ENCODE measurements at regions of chr7 and their contacts with region 1.

Region 1: DNA sequence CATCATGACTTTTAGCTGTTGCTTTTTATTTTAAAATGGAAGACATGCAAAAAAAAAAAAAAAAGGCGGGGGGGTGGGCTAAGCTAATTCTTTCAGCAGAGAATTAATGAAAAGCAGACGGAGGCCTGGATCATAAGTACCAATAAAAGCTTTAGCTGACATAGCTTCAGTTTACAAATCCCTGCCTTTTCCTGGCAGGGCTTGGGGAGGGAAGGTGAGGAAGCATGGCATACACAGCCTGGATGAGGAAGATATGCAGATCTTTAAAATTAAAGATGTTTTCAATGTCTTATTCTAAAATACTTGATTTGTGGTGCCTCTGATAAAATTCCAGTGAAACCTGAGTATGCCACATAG is 57.0 kb downstream of the ICA1 start:
- DNase-seq: no peak
- ATAC-seq: no peak
- H3K4me3 ChIP-seq: no peak overlapping the region
- H3K4me3 Mint-ChIP-seq: no peak overlapping the region
- H3K27ac ChIP-seq: no peak overlapping the region
- H3K27ac Mint-ChIP-seq: no peak overlapping the region
- H3K4me1 ChIP-seq: no peaks in the 10 kb centered on the region
- H3K4me1 Mint-ChIP-seq: peaks cover 0 to 1% (median 1%) of the 10 kb centered on the region in 3 donors
- H3K27me3 ChIP-seq: no peaks in the 10 kb centered on the region
- H3K27me3 Mint-ChIP-seq: peaks cover 4 to 8% of the 10 kb centered on the region in 2 donors

Region 2: GRCh38 chr7:7521259-7521658 is 683.8 kb before region 1 on chr7:
- CTCF ChIA-PET with region 1: interaction called in 1 of 2 experiments, 10 read pairs
- POLR2A ChIA-PET with region 1: no interaction called
- DNase-seq: peak in 1 of 35 experiments; percentile 5
- ATAC-seq: no peak
- H3K4me3 ChIP-seq: no peak overlapping the region
- H3K4me3 Mint-ChIP-seq: no peak overlapping the region
- H3K27ac ChIP-seq: no peak overlapping the region
- H3K27ac Mint-ChIP-seq: no peak overlapping the region
- H3K4me1 ChIP-seq: no peaks in the 10 kb centered on the region
- H3K4me1 Mint-ChIP-seq: no peaks in the 10 kb centered on the region
- H3K27me3 ChIP-seq: no peaks in the 10 kb centered on the region
- H3K27me3 Mint-ChIP-seq: peaks cover 0 to 3% of the 10 kb centered on the region in 2 donors

Region 3: GRCh38 chr7:8236780-8237407 is 31.9 kb after region 1 on chr7:
- CTCF ChIA-PET with region 1: no interaction called
- POLR2A ChIA-PET with region 1: no interaction called
- DNase-seq: no peak
- ATAC-seq: no peak
- H3K4me3 ChIP-seq: no peak overlapping the region
- H3K4me3 Mint-ChIP-seq: no peak overlapping the region
- H3K27ac ChIP-seq: no peak overlapping the region
- H3K27ac Mint-ChIP-seq: no peak overlapping the region
- H3K4me1 ChIP-seq: no peaks in the 10 kb centered on the region
- H3K4me1 Mint-ChIP-seq: no peaks in the 10 kb centered on the region
- H3K27me3 ChIP-seq: peaks cover 0 to 10% of the 10 kb centered on the region in 2 experiments
- H3K27me3 Mint-ChIP-seq: peaks cover 18 to 37% of the 10 kb centered on the region in 2 donors

Region 4: DNA sequence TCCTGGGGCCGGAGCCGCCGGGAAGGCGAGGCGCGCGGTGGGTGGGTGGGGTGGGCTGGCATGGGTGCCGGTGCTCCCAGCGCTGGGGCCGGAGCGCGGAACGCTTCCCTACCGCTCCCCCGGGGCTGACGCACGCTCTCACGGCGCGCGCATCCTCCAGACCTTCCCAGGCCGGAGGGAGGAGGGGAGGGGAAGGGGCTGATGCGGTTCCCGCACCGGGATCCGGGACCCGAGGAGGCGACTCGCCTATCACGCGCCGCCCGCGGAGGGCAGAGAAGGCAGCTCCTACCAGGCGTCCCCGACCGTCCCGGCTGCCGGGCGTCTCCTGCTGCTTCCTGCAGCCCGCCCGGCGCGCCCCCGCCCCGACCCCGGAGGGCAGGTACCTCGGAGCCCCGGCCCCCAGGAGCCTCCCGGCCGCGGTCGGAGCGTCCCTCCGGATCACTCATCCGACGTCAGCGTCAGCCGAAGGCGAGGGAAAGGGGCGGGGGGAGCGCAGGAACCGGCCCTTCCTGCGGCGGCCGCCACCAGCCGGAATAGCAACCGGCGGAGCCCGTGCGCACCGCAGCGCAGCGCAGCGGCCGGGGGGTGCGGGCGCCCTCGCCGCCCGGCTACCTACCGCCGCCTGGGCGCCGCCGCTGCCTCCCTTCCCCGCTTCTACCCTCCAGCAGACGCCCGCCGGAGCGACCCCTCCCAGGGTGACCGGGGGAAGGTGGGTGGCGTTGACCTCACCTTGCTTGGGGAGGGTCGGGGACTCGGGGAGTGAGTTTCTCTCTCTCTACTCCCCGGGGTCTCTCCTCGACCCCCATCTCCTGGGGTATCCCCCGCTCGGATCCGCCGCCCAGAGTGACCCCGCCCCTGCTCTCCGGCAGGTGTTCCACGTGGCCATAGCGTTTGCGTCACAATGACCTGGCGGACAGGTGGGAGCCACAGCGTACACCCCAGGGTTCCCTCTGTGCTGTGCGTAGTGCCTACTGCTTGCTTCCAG is 57.0 kb after region 1 on chr7 and contains the start of gene ICA1:
- CTCF ChIA-PET with region 1: no interaction called
- POLR2A ChIA-PET with region 1: no interaction called
- DNase-seq: peak in 7 of 35 experiments; percentile 1 to 16 (median 6)
- ATAC-seq: peak in 3 of 4 experiments; percentile 31 to 46 (median 41)
- H3K4me3 ChIP-seq: peak within 1 kb of the TSS; percentile 22 to 72
- H3K4me3 Mint-ChIP-seq: peak within 1 kb of the TSS; percentile 64 to 73 (median 71)
- H3K27ac ChIP-seq: no peak within 1 kb of the TSS
- H3K27ac Mint-ChIP-seq: no peak within 1 kb of the TSS
- H3K4me1 ChIP-seq: peaks cover 0 to 10% of the 10 kb centered on the region in 2 experiments
- H3K4me1 Mint-ChIP-seq: peaks cover 6 to 13% (median 11%) of the 10 kb centered on the region in 3 donors
- H3K27me3 ChIP-seq: peaks cover 0 to 14% of the 10 kb centered on the region in 2 experiments
- H3K27me3 Mint-ChIP-seq: peaks cover 61 to 66% of the 10 kb centered on the region in 2 donors
- total RNA-seq, gene ICA1: 0.82 to 2.4 (median 1.1) TPM